CD4-positive, alpha-beta memory T cell (primary cell): ENCODE measurements at regions of chr5 and their contacts with region 1.

Region 1: DNA sequence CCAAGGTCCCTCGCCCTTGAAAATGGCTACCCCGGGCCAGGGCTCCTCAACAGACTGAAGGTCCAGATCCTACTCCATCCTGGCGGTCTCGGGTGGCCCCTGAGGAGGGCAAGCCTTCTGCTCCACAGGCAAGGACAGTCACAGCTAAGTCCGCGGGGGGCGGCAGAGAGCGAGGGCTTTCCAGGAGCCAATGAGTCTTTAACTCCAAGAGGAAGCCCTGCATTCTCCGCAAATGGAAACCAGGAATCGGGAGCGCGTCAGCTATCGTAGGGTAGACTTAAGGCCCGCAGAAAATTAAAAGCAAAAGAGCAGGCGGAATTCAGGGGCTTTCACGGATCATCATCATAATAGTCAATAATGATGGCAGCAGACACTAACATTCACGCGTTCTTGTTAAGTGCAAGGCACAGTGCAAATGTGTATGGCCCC is 87.8 kb upstream of the TNFAIP8 start:
- DNase-seq: peak; percentile 74 to 93 (median 83)
- H3K4me3 ChIP-seq: peak overlapping the region; percentile 53 to 83
- H3K4me3 Mint-ChIP-seq: peak overlapping the region; percentile 97 to 100 (median 100)
- H3K27ac ChIP-seq: peak overlapping the region; percentile 90
- H3K27ac Mint-ChIP-seq: peak overlapping the region; percentile 96 to 99 (median 97)
- H3K4me1 ChIP-seq: peaks cover 30% of the 10 kb centered on the region
- H3K4me1 Mint-ChIP-seq: peaks cover 37 to 72% (median 43%) of the 10 kb centered on the region in 4 donors
- H3K27me3 ChIP-seq: no peaks in the 10 kb centered on the region
- H3K27me3 Mint-ChIP-seq: no peaks in the 10 kb centered on the region

Region 2: GRCh38 chr5:119070828-119071572 is 197.0 kb before region 1 on chr5 and contains the start of gene DMXL1:
- CTCF ChIA-PET with region 1: interaction called, 3 read pairs
- POLR2A ChIA-PET with region 1: interaction called, 19 read pairs
- intact Hi-C with region 1: loop called (anchors 1 kb)
- DNase-seq: peak; percentile 97 to 99 (median 98)
- H3K4me3 ChIP-seq: peak within 1 kb of the TSS; percentile 63 to 95
- H3K4me3 Mint-ChIP-seq: peak within 1 kb of the TSS; percentile 92 to 99 (median 99)
- H3K27ac ChIP-seq: peak within 1 kb of the TSS; percentile 86
- H3K27ac Mint-ChIP-seq: peak within 1 kb of the TSS; percentile 99 to 100 (median 99)
- H3K4me1 ChIP-seq: peaks cover 48% of the 10 kb centered on the region
- H3K4me1 Mint-ChIP-seq: peaks cover 21 to 46% (median 29%) of the 10 kb centered on the region in 4 donors
- H3K27me3 ChIP-seq: no peaks in the 10 kb centered on the region
- H3K27me3 Mint-ChIP-seq: peaks cover 0 to 2% of the 10 kb centered on the region in 2 donors
- total RNA-seq, gene DMXL1: 33.2 to 37.9 TPM

Region 3: GRCh38 chr5:119118000-119118399 is 150.0 kb before region 1 on chr5:
- CTCF ChIA-PET with region 1: no interaction called
- POLR2A ChIA-PET with region 1: no interaction called
- intact Hi-C with region 1: no loop called
- DNase-seq: no peak
- H3K4me3 ChIP-seq: no peak overlapping the region
- H3K4me3 Mint-ChIP-seq: no peak overlapping the region
- H3K27ac ChIP-seq: no peak overlapping the region
- H3K27ac Mint-ChIP-seq: peak overlapping the region in 6 of 7 donors; percentile 15 to 86 (median 38)
- H3K4me1 ChIP-seq: no peaks in the 10 kb centered on the region
- H3K4me1 Mint-ChIP-seq: no peaks in the 10 kb centered on the region
- H3K27me3 ChIP-seq: no peaks in the 10 kb centered on the region
- H3K27me3 Mint-ChIP-seq: no peaks in the 10 kb centered on the region

Region 4: GRCh38 chr5:119290161-119290569 is 22.2 kb after region 1 on chr5:
- CTCF ChIA-PET with region 1: interaction called, 8 read pairs
- POLR2A ChIA-PET with region 1: interaction called, 79 read pairs
- intact Hi-C with region 1: loop called (anchors 1 kb)
- DNase-seq: no peak
- H3K4me3 ChIP-seq: peak overlapping the region in 1 of 2 donors; percentile 38
- H3K4me3 Mint-ChIP-seq: peak overlapping the region; percentile 71 to 92 (median 84)
- H3K27ac ChIP-seq: peak overlapping the region; percentile 88
- H3K27ac Mint-ChIP-seq: peak overlapping the region; percentile 91 to 99 (median 97)
- H3K4me1 ChIP-seq: peaks cover 82% of the 10 kb centered on the region
- H3K4me1 Mint-ChIP-seq: peaks cover 67 to 93% (median 83%) of the 10 kb centered on the region in 4 donors
- H3K27me3 ChIP-seq: no peaks in the 10 kb centered on the region
- H3K27me3 Mint-ChIP-seq: no peaks in the 10 kb centered on the region

Region 5: GRCh38 chr5:119309326-119309725 is 41.4 kb after region 1 on chr5:
- CTCF ChIA-PET with region 1: interaction called, 9 read pairs
- POLR2A ChIA-PET with region 1: interaction called, 187 read pairs
- intact Hi-C with region 1: loop called (anchors 1 kb)
- DNase-seq: peak in 1 of 5 donors; percentile 41
- H3K4me3 ChIP-seq: no peak overlapping the region
- H3K4me3 Mint-ChIP-seq: peak overlapping the region; percentile 68 to 93 (median 78)
- H3K27ac ChIP-seq: peak overlapping the region; percentile 52
- H3K27ac Mint-ChIP-seq: peak overlapping the region; percentile 94 to 99 (median 98)
- H3K4me1 ChIP-seq: peaks cover 100% of the 10 kb centered on the region
- H3K4me1 Mint-ChIP-seq: peaks cover 70 to 97% (median 82%) of the 10 kb centered on the region in 4 donors
- H3K27me3 ChIP-seq: no peaks in the 10 kb centered on the region
- H3K27me3 Mint-ChIP-seq: no peaks in the 10 kb centered on the region

Region 6: GRCh38 chr5:119340597-119341218 is 72.7 kb after region 1 on chr5:
- CTCF ChIA-PET with region 1: interaction called, 25 read pairs
- POLR2A ChIA-PET with region 1: interaction called, 357 read pairs
- intact Hi-C with region 1: loop called (anchors 2 kb)
- DNase-seq: peak; percentile 71 to 85 (median 77)
- H3K4me3 ChIP-seq: peak overlapping the region; percentile 40 to 63
- H3K4me3 Mint-ChIP-seq: peak overlapping the region; percentile 80 to 89 (median 86)
- H3K27ac ChIP-seq: peak overlapping the region; percentile 75
- H3K27ac Mint-ChIP-seq: peak overlapping the region; percentile 89 to 97 (median 92)
- H3K4me1 ChIP-seq: peaks cover 99% of the 10 kb centered on the region
- H3K4me1 Mint-ChIP-seq: peaks cover 81 to 97% (median 89%) of the 10 kb centered on the region in 4 donors
- H3K27me3 ChIP-seq: no peaks in the 10 kb centered on the region
- H3K27me3 Mint-ChIP-seq: no peaks in the 10 kb centered on the region

Region 7: GRCh38 chr5:119374901-119375300 is 106.9 kb after region 1 on chr5:
- CTCF ChIA-PET with region 1: no interaction called
- POLR2A ChIA-PET with region 1: no interaction called
- intact Hi-C with region 1: no loop called
- DNase-seq: no peak
- H3K4me3 ChIP-seq: no peak overlapping the region
- H3K4me3 Mint-ChIP-seq: no peak overlapping the region
- H3K27ac ChIP-seq: no peak overlapping the region
- H3K27ac Mint-ChIP-seq: peak overlapping the region in 3 of 7 donors; percentile 36 to 64 (median 41)
- H3K4me1 ChIP-seq: peaks cover 72% of the 10 kb centered on the region
- H3K4me1 Mint-ChIP-seq: peaks cover 48 to 77% (median 61%) of the 10 kb centered on the region in 4 donors
- H3K27me3 ChIP-seq: no peaks in the 10 kb centered on the region
- H3K27me3 Mint-ChIP-seq: no peaks in the 10 kb centered on the region

Region 8: GRCh38 chr5:119411935-119412602 is 144.1 kb after region 1 on chr5:
- CTCF ChIA-PET with region 1: interaction called, 16 read pairs
- POLR2A ChIA-PET with region 1: interaction called, 7 read pairs
- intact Hi-C with region 1: loop called (anchors 1 kb)
- DNase-seq: peak; percentile 64 to 73 (median 69)
- H3K4me3 ChIP-seq: peak overlapping the region; percentile 33 to 39
- H3K4me3 Mint-ChIP-seq: peak overlapping the region; percentile 79 to 91 (median 83)
- H3K27ac ChIP-seq: no peak overlapping the region
- H3K27ac Mint-ChIP-seq: peak overlapping the region in 6 of 7 donors; percentile 43 to 88 (median 58)
- H3K4me1 ChIP-seq: peaks cover 7% of the 10 kb centered on the region
- H3K4me1 Mint-ChIP-seq: peaks cover 12 to 24% (median 15%) of the 10 kb centered on the region in 4 donors
- H3K27me3 ChIP-seq: no peaks in the 10 kb centered on the region
- H3K27me3 Mint-ChIP-seq: peaks cover 4 to 5% of the 10 kb centered on the region in 2 donors

Region 9: GRCh38 chr5:119445544-119445943 is 177.6 kb after region 1 on chr5:
- CTCF ChIA-PET with region 1: no interaction called
- POLR2A ChIA-PET with region 1: no interaction called
- intact Hi-C with region 1: no loop called
- DNase-seq: no peak
- H3K4me3 ChIP-seq: no peak overlapping the region
- H3K4me3 Mint-ChIP-seq: no peak overlapping the region
- H3K27ac ChIP-seq: no peak overlapping the region
- H3K27ac Mint-ChIP-seq: no peak overlapping the region
- H3K4me1 ChIP-seq: no peaks in the 10 kb centered on the region
- H3K4me1 Mint-ChIP-seq: no peaks in the 10 kb centered on the region
- H3K27me3 ChIP-seq: no peaks in the 10 kb centered on the region
- H3K27me3 Mint-ChIP-seq: peaks cover 0 to 5% of the 10 kb centered on the region in 2 donors